ENCODE measurements at regions of chr1 and their contacts with region 1.

Region 1: DNA sequence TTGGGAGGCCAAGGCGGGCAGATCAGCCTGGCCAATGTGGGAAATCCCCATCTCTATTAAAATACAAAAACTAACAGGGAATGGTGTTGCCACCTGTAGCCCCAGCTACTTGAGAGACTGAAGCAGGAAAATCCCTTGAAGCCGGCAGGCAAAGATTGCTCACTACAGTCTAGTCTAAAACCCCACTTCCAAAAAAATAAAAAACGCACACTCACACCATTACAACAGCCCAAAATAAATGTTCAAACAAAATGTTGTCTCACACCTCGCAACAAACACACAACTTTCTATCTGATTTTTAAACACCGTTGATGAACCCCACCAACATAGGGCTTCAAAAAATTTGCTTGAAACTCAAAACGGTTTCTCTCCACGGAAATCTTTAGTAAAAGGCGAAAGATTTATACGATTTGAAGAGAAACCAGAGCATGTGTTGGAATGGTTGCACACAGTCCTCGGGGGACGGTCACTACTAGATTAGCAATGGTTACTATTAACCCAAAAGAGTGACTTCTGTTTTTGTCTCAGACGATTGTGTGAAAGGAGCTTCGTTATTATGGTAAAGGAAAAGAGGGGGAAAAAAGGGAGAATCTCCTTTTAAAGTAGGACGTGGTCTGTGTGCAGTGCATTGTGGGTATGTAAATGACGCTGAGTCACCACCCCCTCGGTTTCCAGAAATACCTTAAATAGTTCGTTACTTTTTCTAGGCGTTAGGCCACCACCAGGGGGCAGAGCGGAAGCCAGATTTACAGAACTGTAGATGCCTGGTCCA is at the start of gene RNU5D-1:
- DNase-seq: peak; percentile 95 to 96
- H3K4me3 ChIP-seq: peak within 1 kb of the TSS; percentile 47; the same call in 1 of the 2 replicates
- H3K27ac ChIP-seq: peak within 1 kb of the TSS; percentile 98
- H3K4me1 ChIP-seq: peaks cover 54% of the 10 kb centered on the region
- H3K27me3 ChIP-seq: no peaks in the 10 kb centered on the region
- CTCF ChIP-seq: peak; percentile 92
- total RNA-seq, gene RNU5D-1: not detected in 2 replicates

Region 2: DNA sequence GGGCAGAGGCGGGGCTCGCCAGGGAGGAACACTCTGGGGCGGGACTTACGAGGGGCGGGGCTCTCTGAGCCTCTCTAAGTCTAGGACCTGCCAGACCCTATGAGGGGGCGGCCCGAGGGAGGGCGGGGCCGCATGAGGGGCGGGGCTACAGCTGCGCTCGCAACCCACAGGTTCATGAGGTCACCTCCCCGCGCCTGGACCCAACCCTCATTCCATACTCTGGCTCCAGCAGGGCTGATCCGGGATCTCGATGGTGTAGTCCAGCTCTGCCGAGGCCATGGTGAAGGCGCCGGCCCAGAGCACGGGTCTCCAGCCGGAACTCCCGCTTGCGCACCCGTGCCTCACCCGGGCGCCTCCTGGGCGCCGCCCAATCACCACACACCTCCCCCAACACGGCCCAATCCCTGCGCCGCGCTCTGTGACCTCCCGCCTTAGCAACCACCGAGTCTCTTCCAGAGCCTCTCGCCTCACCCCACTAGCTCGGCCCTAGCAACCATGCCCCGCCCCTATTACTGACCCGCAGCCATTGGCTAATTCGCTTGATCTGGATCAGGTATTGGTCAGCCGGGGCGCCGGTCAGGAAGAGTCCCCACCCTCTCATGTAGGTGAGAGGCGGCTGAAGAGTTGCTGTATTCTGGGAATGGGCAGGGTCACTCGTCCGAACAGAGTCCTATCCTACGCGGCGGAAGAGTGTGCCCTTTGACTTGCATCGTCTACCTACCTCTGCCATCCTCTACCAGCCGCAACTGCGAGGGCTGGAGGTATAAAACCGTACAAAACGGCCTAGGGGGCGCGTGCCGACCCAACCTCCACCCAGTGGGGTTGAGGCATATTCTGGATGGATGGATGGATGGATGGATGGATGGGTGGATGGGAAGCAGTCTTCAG is 56.6 kb before region 1 on chr1 and contains the starts of genes ARMH1 and TMEM53:
- CTCF ChIA-PET with region 1: interaction called, 17 read pairs
- POLR2A ChIA-PET with region 1: interaction called, 3 read pairs
- intact Hi-C with region 1: no loop called
- DNase-seq: peak; percentile 98 to 100
- H3K4me3 ChIP-seq: peak within 1 kb of the TSS; percentile 81
- H3K27ac ChIP-seq: peak within 1 kb of the TSS; percentile 89
- H3K4me1 ChIP-seq: peaks cover 54% of the 10 kb centered on the region
- H3K27me3 ChIP-seq: no peaks in the 10 kb centered on the region
- CTCF ChIP-seq: no peak
- total RNA-seq, gene ARMH1: 16.3 and 16.9 TPM in 2 replicates
- total RNA-seq, gene TMEM53: 33.2 and 36.1 TPM in 2 replicates

Region 3: GRCh38 chr1:44775078-44775929 is 44.4 kb after region 1 on chr1 and contains the start of gene RPS8:
- CTCF ChIA-PET with region 1: interaction called, 4 read pairs
- POLR2A ChIA-PET with region 1: interaction called, 3 read pairs
- intact Hi-C with region 1: loop called (anchors 2 kb)
- DNase-seq: peak; percentile 86 to 87
- H3K4me3 ChIP-seq: peak within 1 kb of the TSS; percentile 95
- H3K27ac ChIP-seq: peak within 1 kb of the TSS; percentile 98
- H3K4me1 ChIP-seq: peaks cover 22% of the 10 kb centered on the region
- H3K27me3 ChIP-seq: no peaks in the 10 kb centered on the region
- CTCF ChIP-seq: 0 out of 2 replicates have a peak, but pooled peaks have one; percentile 10
- total RNA-seq, gene RPS8: 2,059 and 2,176 TPM in 2 replicates

Region 4: GRCh38 chr1:44785441-44786137 is 54.7 kb after region 1 on chr1:
- CTCF ChIA-PET with region 1: no interaction called
- POLR2A ChIA-PET with region 1: no interaction called
- intact Hi-C with region 1: no loop called
- DNase-seq: no peak
- H3K4me3 ChIP-seq: peak overlapping the region; percentile 16; the same call in 1 of the 2 replicates
- H3K27ac ChIP-seq: no peak overlapping the region
- H3K4me1 ChIP-seq: no peaks in the 10 kb centered on the region
- H3K27me3 ChIP-seq: no peaks in the 10 kb centered on the region
- CTCF ChIP-seq: no peak

Region 5: DNA sequence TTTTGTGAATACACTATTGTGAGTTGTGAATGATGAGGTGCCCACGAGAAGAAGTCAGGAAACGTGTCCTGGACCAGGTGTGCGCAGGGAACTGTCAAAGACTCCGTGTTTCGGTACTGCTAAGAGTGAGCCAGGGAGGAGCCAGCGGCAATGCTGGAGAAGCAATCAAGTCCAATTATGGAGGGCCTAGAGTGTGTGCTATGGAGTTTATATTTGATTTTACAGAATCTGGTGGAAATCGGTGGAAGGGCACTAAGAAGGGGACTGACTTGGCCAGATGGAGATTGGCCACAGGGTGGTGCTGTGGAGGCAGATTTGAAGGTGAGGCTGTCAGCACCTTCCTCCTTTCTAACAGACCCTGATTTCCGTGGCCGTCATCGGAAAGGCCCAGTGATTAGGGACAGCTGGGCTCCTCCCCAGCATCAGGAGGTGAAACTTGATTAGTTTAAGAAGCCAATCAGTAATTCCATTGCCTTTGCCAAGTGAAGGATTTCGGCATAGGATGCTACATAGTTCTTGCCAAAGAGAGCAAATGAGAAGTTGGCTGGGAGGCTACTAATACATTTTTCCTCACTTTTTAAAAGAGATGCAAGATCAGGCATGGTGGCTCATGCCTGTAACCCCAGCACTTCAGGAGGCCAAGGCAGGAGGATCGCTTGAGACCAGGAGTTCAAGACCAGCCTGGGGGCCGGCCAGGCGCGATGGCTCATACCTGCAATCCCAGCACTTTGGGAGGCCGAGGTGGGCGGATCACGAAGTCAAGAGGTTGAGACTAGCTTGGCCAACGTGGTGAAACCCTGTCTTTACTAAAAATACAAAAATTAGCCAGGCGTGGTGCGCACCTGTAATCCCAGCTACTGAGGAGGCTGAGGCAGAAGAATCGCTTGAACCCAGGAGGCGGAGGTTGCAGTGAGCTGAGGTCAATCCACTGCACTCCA is 105.1 kb after region 1 on chr1:
- CTCF ChIA-PET with region 1: no interaction called
- POLR2A ChIA-PET with region 1: interaction called, 12 read pairs
- intact Hi-C with region 1: no loop called
- DNase-seq: peak; percentile 61 to 84
- H3K4me3 ChIP-seq: no peak overlapping the region
- H3K27ac ChIP-seq: no peak overlapping the region
- H3K4me1 ChIP-seq: no peaks in the 10 kb centered on the region
- H3K27me3 ChIP-seq: no peaks in the 10 kb centered on the region
- CTCF ChIP-seq: peak; percentile 85

Region 6: GRCh38 chr1:45266151-45266801 is 535.3 kb after region 1 on chr1:
- CTCF ChIA-PET with region 1: interaction called, 13 read pairs
- POLR2A ChIA-PET with region 1: no interaction called
- intact Hi-C with region 1: no loop called
- DNase-seq: peak in 1 of 2 experiments; percentile 42
- H3K4me3 ChIP-seq: no peak overlapping the region
- H3K27ac ChIP-seq: peak overlapping the region; percentile 53
- H3K4me1 ChIP-seq: peaks cover 12% of the 10 kb centered on the region
- H3K27me3 ChIP-seq: no peaks in the 10 kb centered on the region
- CTCF ChIP-seq: no peak

Region 7: DNA sequence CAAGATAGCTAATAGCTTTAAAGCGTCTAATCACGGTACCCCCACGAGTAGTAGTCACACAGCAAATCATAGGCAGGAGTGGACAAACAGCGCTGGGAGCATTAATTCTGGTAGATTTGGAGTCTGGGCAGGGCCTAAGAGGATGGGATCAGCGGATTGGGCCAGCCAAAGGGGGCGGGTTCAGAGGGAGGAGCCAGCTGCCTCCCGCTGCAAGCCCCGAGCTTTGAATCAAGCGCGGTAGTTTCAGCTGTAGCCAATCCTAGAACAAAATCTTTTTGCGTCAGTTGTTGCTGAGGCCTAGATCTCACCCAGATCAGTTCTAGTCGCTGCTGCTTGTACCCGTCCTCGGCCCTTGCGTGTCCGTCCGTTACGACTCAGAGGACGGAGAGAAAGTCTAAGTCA is 852.3 kb after region 1 on chr1:
- CTCF ChIA-PET with region 1: no interaction called
- POLR2A ChIA-PET with region 1: interaction called, 6 read pairs
- intact Hi-C with region 1: loop called (anchors 10 kb)
- DNase-seq: peak; percentile 92 to 95
- H3K4me3 ChIP-seq: peak overlapping the region; percentile 86
- H3K27ac ChIP-seq: peak overlapping the region; percentile 64
- H3K4me1 ChIP-seq: peaks cover 17% of the 10 kb centered on the region
- H3K27me3 ChIP-seq: no peaks in the 10 kb centered on the region
- CTCF ChIP-seq: no peak

Region 8: GRCh38 chr1:46247436-46248121 is 1516.7 kb after region 1 on chr1 and contains the start of gene RAD54L:
- CTCF ChIA-PET with region 1: no interaction called
- POLR2A ChIA-PET with region 1: interaction called, 25 read pairs
- intact Hi-C with region 1: no loop called
- DNase-seq: peak; percentile 95 to 99
- H3K4me3 ChIP-seq: peak within 1 kb of the TSS; percentile 72
- H3K27ac ChIP-seq: peak within 1 kb of the TSS; percentile 60
- H3K4me1 ChIP-seq: peaks cover 21% of the 10 kb centered on the region
- H3K27me3 ChIP-seq: no peaks in the 10 kb centered on the region
- CTCF ChIP-seq: no peak
- total RNA-seq, gene RAD54L: 44.8 and 56.4 TPM in 2 replicates